ENCODE measurements at regions of chr14 and their contacts with region 1.

Region 1: DNA sequence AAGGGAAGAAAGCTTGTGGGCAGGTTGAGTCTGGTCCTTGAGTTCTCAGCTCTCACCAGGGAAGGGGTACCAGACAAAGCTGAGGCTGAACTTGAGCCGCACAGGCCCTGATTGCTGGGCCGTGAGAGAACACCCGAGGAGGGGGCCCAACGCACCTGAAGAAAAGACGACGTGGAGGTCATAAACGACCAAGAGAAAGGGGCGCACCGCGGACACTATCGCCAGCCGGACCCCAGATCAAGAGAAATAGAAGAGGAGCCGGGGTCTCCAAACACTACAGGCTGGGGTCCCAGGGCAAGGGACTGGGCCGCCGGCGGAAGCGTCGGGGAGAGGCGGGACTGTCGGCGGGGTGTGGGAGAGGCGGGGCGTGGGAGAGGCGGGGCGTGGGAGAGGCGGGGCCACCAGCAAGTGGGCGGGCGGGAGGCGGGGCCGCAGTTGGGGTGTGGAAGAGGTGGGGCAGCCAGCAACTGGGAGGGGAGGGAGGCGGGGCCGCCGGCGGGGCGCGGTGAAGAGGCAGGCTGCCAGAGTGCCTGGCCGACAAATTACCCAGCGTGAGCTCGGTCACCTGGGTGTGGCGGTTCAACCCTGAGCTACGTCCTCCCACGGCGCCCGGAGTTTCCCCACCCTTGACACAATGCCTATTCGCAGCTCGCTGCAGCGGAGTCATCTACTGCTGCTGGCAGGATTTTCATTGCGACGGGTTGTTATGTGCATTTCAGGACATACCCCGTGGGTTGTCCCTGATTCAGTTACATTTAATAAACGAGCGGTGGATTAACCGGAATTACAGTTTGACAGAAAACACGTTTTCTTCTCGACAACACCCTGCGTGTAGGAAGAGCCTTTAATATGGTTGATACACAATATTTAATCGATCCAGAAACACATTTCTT is 15.5 kb upstream of the NEMF start:
- DNase-seq: peak; percentile 96 to 99
- ATAC-seq: peak; percentile 95 to 97 (median 96)
- H3K4me3 ChIP-seq: peak overlapping the region; percentile 71
- H3K27ac ChIP-seq: peak overlapping the region; percentile 88
- H3K4me1 ChIP-seq: peaks cover 11% of the 10 kb centered on the region
- H3K27me3 ChIP-seq: no peaks in the 10 kb centered on the region
- CTCF ChIP-seq: no peak

Region 2: DNA sequence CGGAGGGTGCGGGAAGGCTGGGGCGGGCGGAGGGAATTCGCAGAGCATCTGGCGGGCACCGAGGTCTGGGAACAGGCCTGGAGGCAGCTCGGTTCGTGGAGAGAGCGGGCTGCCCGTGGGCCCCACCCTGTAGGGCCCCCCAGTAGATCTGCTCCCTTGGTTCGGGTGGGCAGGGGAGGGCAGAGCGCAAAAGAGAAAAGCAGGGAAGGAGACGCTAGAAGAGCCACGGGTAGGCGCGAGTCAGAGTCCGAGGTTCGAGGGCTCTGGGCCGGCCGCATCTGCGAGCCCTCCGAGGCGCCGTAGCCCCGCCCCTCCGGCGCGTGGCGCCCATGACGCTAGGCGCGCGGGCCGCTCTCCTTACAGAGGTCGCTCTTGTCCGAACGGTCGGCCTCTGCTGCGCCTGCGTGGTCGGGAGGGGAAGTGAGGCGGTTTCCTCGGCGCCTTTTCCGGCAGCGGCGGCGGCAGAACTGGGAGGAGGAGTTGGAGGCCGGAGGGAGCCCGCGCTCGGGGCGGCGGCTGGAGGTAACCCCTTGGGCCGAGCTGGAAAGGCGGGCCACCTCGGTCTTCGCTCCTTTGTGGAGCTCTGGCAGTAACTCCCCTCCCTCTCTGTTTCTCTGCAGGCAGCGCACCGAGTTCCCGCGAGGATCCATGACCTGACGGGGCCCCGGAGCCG is 24.7 kb after region 1 on chr14 and contains the start of gene ARF6:
- intact Hi-C with region 1: loop called in 1 of 2 experiments (anchors 2 kb)
- DNase-seq: peak; percentile 100
- ATAC-seq: peak; percentile 96 to 98 (median 97)
- H3K4me3 ChIP-seq: peak within 1 kb of the TSS; percentile 90
- H3K27ac ChIP-seq: peak within 1 kb of the TSS; percentile 99
- H3K4me1 ChIP-seq: peaks cover 35% of the 10 kb centered on the region
- H3K27me3 ChIP-seq: no peaks in the 10 kb centered on the region
- CTCF ChIP-seq: no peak
- total RNA-seq, gene ARF6: 19.0 to 37.4 (median 30.6) TPM

Region 3: GRCh38 chr14:50003213-50004031 is 135.3 kb after region 1 on chr14:
- intact Hi-C with region 1: loop called (anchors 2 to 10 kb)
- DNase-seq: peak; percentile 86 to 90
- ATAC-seq: peak in 3 of 4 donors; percentile 14 to 27 (median 21)
- H3K4me3 ChIP-seq: peak overlapping the region; percentile 73
- H3K27ac ChIP-seq: peak overlapping the region; percentile 94
- H3K4me1 ChIP-seq: peaks cover 48% of the 10 kb centered on the region
- H3K27me3 ChIP-seq: no peaks in the 10 kb centered on the region
- CTCF ChIP-seq: peak; percentile 16

Region 4: GRCh38 chr14:50099335-50099734 is 231.3 kb after region 1 on chr14:
- intact Hi-C with region 1: loop called in 1 of 2 experiments (anchors 1 kb)
- DNase-seq: no peak
- ATAC-seq: no peak
- H3K4me3 ChIP-seq: no peak overlapping the region
- H3K27ac ChIP-seq: no peak overlapping the region
- H3K4me1 ChIP-seq: no peaks in the 10 kb centered on the region
- H3K27me3 ChIP-seq: no peaks in the 10 kb centered on the region
- CTCF ChIP-seq: no peak

Region 5: DNA sequence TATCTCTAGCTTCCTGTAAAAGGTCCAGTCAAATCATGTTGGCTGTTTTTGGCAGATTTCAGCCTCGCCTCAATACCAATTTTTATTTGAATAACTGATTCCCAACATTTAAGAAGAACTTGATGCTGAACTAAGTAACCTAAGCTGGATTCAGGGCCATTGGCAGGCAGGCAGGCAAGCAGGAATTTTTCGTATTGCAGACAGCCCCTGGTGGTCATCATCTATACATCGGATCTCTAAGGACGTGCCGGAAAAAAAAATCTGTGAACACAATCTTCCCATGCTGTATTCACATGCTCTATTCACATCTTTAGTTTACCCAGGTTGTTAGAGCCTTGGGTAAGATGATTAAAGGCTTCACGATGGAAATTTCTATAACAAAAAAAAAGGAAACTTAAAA is 241.3 kb after region 1 on chr14:
- intact Hi-C with region 1: loop called in 1 of 2 experiments (anchors 5 kb)
- DNase-seq: no peak
- ATAC-seq: no peak
- H3K4me3 ChIP-seq: no peak overlapping the region
- H3K27ac ChIP-seq: no peak overlapping the region
- H3K4me1 ChIP-seq: peaks cover 4% of the 10 kb centered on the region
- H3K27me3 ChIP-seq: no peaks in the 10 kb centered on the region
- CTCF ChIP-seq: no peak

Region 6: DNA sequence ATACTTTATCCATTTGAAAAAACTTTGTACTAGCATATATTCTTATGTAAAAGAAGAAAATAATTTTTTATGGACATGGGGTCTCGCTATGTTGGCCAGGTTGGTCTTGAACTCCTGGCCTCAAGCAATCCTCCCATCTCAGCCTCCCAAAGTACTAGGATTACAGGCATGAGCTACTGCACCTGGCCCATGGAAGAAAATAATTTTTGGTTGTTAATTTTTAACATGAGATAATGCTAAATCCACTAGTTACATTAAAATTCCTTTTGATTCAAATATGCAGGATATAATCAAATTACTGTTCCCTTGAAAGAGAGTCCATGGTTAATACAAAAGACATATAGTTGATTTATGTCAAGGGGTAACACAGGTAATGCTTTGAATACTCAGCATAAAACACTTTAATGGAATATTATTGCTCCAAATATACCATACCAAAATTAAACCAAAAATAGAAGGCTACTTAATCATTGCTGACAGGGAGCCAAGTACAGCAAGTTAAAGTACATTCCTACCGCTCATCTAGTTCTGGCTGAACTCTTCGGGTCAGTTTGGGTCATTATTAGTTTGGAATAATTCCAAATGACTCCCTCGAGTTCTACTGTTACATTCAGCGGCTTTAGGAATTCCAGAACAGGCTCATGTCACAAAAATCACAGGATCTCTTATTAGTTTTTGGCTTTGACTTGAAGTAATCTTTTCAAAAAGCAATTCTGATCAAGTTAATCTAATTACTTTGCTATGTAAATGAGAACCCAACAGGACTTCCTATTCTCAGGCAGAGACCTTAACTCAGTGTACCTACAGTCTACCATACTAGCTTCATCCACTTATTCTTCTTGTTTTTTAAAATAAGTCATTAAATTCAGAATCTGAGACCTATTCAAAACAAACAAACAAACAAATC is 357.2 kb after region 1 on chr14:
- intact Hi-C with region 1: loop called in 1 of 2 experiments (anchors 10 kb)
- DNase-seq: no peak
- ATAC-seq: peak; percentile 83 to 94 (median 92)
- H3K4me3 ChIP-seq: no peak overlapping the region
- H3K27ac ChIP-seq: peak overlapping the region; percentile 64
- H3K4me1 ChIP-seq: peaks cover 77% of the 10 kb centered on the region
- H3K27me3 ChIP-seq: no peaks in the 10 kb centered on the region
- CTCF ChIP-seq: no peak